ENCODE measurements at regions of chr9 and their contacts with region 1.

Region 1: GRCh38 chr9:91422758-91423711 is 597 bp downstream of the NFIL3 start:
- DNase-seq: peak; percentile 71
- H3K4me3 Mint-ChIP-seq: peak overlapping the region; percentile 98
- H3K27ac Mint-ChIP-seq: peak overlapping the region; percentile 93
- H3K4me1 Mint-ChIP-seq: peaks cover 62% of the 10 kb centered on the region
- H3K27me3 Mint-ChIP-seq: peaks cover 4% of the 10 kb centered on the region

Region 2: DNA sequence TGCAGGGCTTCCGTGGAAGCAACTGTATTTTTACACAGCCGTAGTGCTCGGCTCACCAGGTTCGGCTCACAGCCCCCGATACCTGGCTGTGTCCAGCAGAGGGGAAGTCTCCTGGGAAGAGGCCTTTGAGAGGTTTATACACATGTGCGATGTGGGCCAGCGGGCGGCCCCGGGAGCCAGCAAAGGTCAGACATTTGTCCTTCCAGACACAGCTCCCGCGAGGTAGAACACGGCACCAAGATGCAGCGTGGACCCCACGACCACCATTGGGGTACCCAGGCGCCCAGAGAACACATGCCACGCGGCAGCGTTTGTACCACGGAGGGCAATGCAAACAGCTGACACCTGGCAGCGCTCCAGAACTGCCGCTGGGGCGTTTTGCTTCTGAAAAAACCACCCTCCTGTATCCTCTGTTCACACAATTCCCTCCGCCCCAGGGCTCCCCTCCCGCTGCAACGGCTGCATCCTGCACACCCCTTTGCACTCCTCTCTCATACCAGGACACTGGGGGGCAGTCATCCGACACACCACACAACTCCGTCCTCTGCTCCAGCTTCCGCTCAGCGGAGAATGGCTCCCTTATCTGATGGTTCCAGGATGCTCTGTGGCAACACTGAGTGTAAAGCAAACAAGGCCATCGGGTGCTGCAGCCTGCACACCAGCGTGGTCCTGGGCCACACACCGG is 386.1 kb before region 1 on chr9:
- CTCF ChIA-PET with region 1: interaction called, 41 read pairs
- POLR2A ChIA-PET with region 1: interaction called, 4 read pairs
- intact Hi-C with region 1: loop called (anchors 1 kb)
- DNase-seq: peak; percentile 86
- H3K4me3 Mint-ChIP-seq: peak overlapping the region; percentile 7
- H3K27ac Mint-ChIP-seq: peak overlapping the region; percentile 42
- H3K4me1 Mint-ChIP-seq: peaks cover 48% of the 10 kb centered on the region
- H3K27me3 Mint-ChIP-seq: peaks cover 22% of the 10 kb centered on the region

Region 3: GRCh38 chr9:91101611-91102168 is 321.3 kb before region 1 on chr9:
- CTCF ChIA-PET with region 1: no interaction called
- POLR2A ChIA-PET with region 1: interaction called, 7 read pairs
- intact Hi-C with region 1: loop called (anchors 2 kb)
- DNase-seq: peak; percentile 95
- H3K4me3 Mint-ChIP-seq: peak overlapping the region; percentile 73
- H3K27ac Mint-ChIP-seq: peak overlapping the region; percentile 93
- H3K4me1 Mint-ChIP-seq: peaks cover 56% of the 10 kb centered on the region
- H3K27me3 Mint-ChIP-seq: peaks cover 5% of the 10 kb centered on the region

Region 4: GRCh38 chr9:91193658-91194391 is 229.2 kb before region 1 on chr9:
- CTCF ChIA-PET with region 1: interaction called, 5 read pairs
- POLR2A ChIA-PET with region 1: interaction called, 12 read pairs
- intact Hi-C with region 1: loop called (anchors 1 kb)
- DNase-seq: peak; percentile 92
- H3K4me3 Mint-ChIP-seq: peak overlapping the region; percentile 77
- H3K27ac Mint-ChIP-seq: peak overlapping the region; percentile 98
- H3K4me1 Mint-ChIP-seq: peaks cover 62% of the 10 kb centered on the region
- H3K27me3 Mint-ChIP-seq: no peaks in the 10 kb centered on the region

Region 5: DNA sequence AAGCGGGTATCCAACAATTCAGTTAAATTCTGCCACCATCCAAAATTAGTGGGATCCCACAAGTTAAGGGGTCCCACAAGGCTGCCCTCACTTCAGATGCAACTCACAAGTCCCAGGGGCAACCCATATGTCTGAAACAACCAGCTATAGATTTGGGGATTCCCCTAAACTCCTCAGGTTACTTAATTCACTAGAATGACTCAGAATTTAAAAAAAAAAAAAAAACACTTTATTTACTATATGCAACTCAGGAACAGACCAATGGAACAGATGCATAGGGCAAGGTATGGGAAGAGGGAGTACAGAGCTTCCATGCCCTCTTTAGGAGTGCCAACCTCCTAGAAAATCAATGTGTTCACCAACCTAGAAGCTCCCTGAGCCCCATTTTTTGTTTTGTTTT is 76.4 kb before region 1 on chr9:
- CTCF ChIA-PET with region 1: interaction called, 5 read pairs
- POLR2A ChIA-PET with region 1: interaction called, 11 read pairs
- intact Hi-C with region 1: loop called (anchors 1 kb)
- DNase-seq: no peak
- H3K4me3 Mint-ChIP-seq: no peak overlapping the region
- H3K27ac Mint-ChIP-seq: no peak overlapping the region
- H3K4me1 Mint-ChIP-seq: peaks cover 57% of the 10 kb centered on the region
- H3K27me3 Mint-ChIP-seq: no peaks in the 10 kb centered on the region

Region 6: DNA sequence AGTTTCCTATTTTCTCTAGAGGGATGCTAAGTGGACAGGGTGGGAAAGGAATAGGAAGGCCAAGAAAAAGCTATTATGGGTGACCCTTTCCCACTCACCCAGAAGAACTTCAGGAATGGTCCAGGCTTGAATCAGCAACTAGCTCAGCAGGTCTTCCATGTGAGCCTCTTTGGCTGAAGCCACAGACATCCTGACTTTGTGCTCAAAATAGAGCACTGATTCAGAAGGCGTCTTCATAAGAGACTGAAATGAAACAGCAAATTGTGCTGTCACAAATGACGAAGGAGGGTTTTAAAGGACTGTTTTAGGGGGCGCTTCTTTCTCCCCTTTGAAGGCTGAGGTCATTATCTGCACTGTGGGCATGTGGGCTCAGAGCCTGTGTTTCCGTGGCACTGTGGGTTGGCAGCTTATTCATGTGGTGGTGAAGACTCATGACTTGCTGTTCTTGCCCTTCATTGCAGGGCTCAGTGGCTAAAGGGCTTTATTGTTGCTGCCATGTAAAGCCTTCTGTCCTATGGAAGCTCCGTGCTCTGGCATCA is 66.4 kb after region 1 on chr9:
- CTCF ChIA-PET with region 1: no interaction called
- POLR2A ChIA-PET with region 1: no interaction called
- intact Hi-C with region 1: no loop called
- DNase-seq: peak; percentile 29
- H3K4me3 Mint-ChIP-seq: no peak overlapping the region
- H3K27ac Mint-ChIP-seq: no peak overlapping the region
- H3K4me1 Mint-ChIP-seq: no peaks in the 10 kb centered on the region
- H3K27me3 Mint-ChIP-seq: peaks cover 8% of the 10 kb centered on the region

Measured in activated CD4-positive, alpha-beta memory T cell treated with anti-CD3 and anti-CD28 coated beads for 36 hours (primary cell).